Right ventricle myocardium inferior (tissue), 1 donor: ENCODE measurements at regions of chr15 and their contacts with region 1.

Region 1: GRCh38 chr15:76330080-76330680 is 6.4 kb upstream of the ISL2 start:
- DNase-seq: no peak
- ATAC-seq: peak; percentile 82

Region 2: DNA sequence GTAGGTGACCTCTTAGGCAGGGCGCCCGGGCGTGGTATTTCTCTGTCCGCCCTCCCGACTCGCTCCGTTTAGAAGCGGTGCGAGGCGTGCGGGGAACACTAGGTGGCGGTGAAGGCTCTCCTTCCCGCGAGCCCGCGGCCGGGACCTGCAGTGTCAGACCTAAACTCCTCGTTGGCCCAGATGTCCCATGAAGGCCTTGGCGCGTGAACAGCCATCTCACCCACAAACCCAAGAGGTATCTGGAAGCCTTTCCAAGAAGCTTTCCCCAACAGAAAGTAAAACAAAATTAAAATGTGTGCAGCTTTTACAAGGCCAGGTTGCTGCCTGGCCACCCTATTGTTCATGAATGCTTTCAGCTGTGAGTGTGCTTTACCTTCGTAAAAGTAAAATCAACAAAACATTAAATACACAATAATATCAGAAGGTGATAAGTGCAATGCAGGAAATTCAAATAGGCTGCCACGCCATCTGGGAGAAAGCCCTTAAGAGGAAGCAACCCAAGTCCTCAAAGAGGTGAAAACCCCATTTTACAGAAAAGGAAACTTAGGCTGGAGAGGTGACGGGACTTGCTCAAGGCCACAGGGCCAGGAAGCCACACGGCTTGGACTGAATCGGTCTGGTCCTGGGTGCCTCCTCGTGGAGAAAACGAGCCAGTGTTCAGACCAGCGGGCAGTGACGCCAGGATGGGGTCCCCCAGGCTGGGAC is 139.2 kb before region 1 on chr15:
- intact Hi-C with region 1: loop called (anchors 2 kb)
- DNase-seq: peak; percentile 89
- ATAC-seq: peak; percentile 90

Region 3: GRCh38 chr15:76196269-76197231 is 133.6 kb before region 1 on chr15:
- intact Hi-C with region 1: loop called (anchors 2 kb)
- DNase-seq: no peak
- ATAC-seq: peak; percentile 63

Region 4: GRCh38 chr15:76235186-76235826 is 94.9 kb before region 1 on chr15:
- intact Hi-C with region 1: loop called (anchors 2 kb)
- DNase-seq: no peak
- ATAC-seq: peak; percentile 71

Region 5: GRCh38 chr15:76368122-76368589 is 38.0 kb after region 1 on chr15:
- intact Hi-C with region 1: no loop called
- DNase-seq: no peak
- ATAC-seq: no peak